Left ventricle myocardium inferior (tissue), 1 donor: ENCODE measurements at regions of chr18 and their contacts with region 1.

Region 1: GRCh38 chr18:56575819-56576663 is 62.4 kb downstream of the TXNL1 start:
- DNase-seq: no peak
- H3K4me3 ChIP-seq: no peak overlapping the region
- H3K27ac ChIP-seq: peak overlapping the region; percentile 76
- H3K4me1 ChIP-seq: peaks cover 37% of the 10 kb centered on the region
- H3K27me3 ChIP-seq: no peaks in the 10 kb centered on the region
- CTCF ChIP-seq: peak; percentile 86

Region 2: GRCh38 chr18:55234366-55235093 is 1341.5 kb before region 1 on chr18:
- intact Hi-C with region 1: loop called (anchors 10 kb)
- DNase-seq: peak; percentile 73
- H3K4me3 ChIP-seq: peak overlapping the region; percentile 33
- H3K27ac ChIP-seq: peak overlapping the region; percentile 88
- H3K4me1 ChIP-seq: peaks cover 64% of the 10 kb centered on the region
- H3K27me3 ChIP-seq: no peaks in the 10 kb centered on the region
- CTCF ChIP-seq: peak; percentile 83

Region 3: DNA sequence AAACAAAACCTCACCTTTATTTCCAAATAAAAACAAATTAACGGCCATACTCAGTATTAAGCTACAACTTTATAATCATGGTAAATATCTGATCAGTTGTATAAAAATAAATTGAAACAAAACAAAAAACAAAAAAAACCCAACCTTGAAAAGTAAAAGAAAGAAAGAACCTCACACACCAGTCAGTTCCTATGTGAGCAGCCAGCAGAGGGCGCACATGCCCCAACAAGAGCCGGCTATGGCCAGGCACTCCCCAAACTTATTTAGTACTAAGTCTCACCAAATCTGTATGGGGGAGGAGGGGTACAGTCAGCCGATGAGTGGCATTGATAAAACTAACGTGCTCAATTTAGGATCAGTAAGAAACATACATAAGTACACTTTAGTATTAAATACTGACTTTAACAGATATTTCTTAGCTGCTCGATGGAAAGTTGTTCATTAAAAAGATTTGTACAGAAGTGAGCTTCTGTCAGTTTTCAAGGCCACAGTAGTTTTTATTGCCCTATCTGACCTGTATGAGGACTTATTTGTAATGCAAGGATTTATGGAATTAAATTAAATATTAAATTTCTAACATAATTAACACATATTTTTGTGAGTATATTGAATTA is 1160.7 kb before region 1 on chr18:
- intact Hi-C with region 1: loop called (anchors 10 kb)
- DNase-seq: peak; percentile 89
- H3K4me3 ChIP-seq: peak overlapping the region; percentile 8
- H3K27ac ChIP-seq: peak overlapping the region; percentile 53
- H3K4me1 ChIP-seq: peaks cover 59% of the 10 kb centered on the region
- H3K27me3 ChIP-seq: no peaks in the 10 kb centered on the region
- CTCF ChIP-seq: peak; percentile 98

Region 4: GRCh38 chr18:55861266-55861665 is 714.8 kb before region 1 on chr18:
- intact Hi-C with region 1: loop called (anchors 10 kb)
- DNase-seq: no peak
- H3K4me3 ChIP-seq: no peak overlapping the region
- H3K27ac ChIP-seq: no peak overlapping the region
- H3K4me1 ChIP-seq: peaks cover 25% of the 10 kb centered on the region
- H3K27me3 ChIP-seq: no peaks in the 10 kb centered on the region
- CTCF ChIP-seq: peak; percentile 58

Region 5: GRCh38 chr18:56083097-56083521 is 492.9 kb before region 1 on chr18:
- intact Hi-C with region 1: loop called (anchors 10 kb)
- DNase-seq: peak; percentile 74
- H3K4me3 ChIP-seq: no peak overlapping the region
- H3K27ac ChIP-seq: peak overlapping the region; percentile 74
- H3K4me1 ChIP-seq: peaks cover 28% of the 10 kb centered on the region
- H3K27me3 ChIP-seq: no peaks in the 10 kb centered on the region
- CTCF ChIP-seq: peak; percentile 47

Region 6: DNA sequence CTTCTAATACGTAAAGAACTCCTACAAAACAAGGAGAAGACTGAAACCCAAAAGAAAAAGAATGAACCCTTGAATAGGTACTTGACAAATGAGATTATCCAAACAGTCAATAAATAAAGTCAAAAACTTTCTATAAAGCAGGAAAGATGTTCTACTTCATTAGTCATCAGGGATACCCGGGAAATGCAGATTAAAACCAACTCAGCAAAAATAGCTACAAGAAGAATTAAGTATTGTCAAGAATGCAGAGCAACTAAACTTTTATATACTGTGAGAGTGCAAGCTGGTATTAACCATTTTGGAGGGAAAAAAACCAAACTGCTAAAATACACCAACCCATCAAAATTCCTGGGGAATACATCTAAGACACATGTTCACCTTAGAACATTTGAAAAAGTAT is 52.0 kb after region 1 on chr18:
- intact Hi-C with region 1: no loop called
- DNase-seq: no peak
- H3K4me3 ChIP-seq: no peak overlapping the region
- H3K27ac ChIP-seq: no peak overlapping the region
- H3K4me1 ChIP-seq: peaks cover 74% of the 10 kb centered on the region
- H3K27me3 ChIP-seq: no peaks in the 10 kb centered on the region
- CTCF ChIP-seq: no peak